ENCODE measurements at regions of chr1 and their contacts with region 1.

Region 1: DNA sequence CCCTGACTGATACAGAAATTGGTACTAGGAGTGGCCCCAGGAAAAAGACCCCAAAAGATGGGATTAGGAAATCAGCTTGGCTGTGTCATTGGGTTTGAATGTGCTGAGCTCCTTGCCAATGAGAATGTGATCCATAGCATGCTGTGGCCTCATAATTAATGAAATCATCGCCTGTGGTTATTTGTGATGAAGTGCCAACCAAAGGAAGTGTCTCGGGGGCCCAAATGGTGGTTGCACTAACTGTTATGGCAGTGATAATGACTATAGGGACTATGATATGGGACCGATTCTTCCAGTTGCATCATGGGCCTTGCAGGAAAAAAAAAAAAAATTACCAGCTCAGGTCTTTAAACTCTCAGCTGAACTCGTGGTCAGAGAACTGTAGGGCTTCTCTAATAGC is 15.4 kb upstream of the ZDHHC18 start:
- DNase-seq: no peak
- ATAC-seq: 0 out of 3 replicates have a peak, but pooled peaks have one; percentile 20
- H3K4me3 ChIP-seq: no peak overlapping the region
- H3K27ac ChIP-seq: no peak overlapping the region
- H3K4me1 ChIP-seq: no peaks in the 10 kb centered on the region
- H3K27me3 ChIP-seq: no peaks in the 10 kb centered on the region
- CTCF ChIP-seq: no peak
- EP300 ChIP-seq: no peak
- POLR2A ChIP-seq: no peak
- RAD21 ChIP-seq: no peak

Region 2: DNA sequence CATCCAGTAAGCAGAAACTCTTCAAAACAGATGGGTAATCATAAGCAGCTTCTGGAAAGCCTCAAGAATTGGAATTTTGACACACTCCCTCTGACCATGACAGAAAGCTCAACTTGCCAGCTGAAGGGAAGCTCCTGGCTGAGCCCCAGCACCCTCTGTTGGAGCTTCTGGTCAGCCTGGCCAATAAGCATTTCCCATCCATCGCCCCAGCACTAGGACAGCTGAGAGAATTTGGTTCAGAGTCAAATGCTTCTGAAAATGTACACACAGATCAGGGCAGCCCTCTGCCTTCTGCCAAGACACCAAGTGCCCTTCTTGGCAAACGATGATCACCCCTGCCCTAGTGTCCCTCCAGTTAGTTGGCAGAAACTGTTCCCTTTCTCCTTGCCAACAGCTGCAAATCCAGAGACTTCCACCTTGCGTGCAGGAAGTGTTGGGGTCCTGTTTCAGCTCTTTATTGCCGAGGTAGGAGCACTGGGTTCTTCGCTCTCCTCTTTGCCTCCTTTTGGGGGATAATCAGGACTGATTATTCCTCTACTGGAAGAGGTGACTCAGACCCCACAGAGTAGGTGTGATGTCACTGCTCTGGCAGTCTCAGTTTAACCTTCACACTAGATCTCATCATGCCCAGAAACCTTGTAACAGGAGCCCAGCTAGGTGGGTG is 11.4 kb before region 1 on chr1:
- CTCF ChIA-PET with region 1: interaction called, 36 read pairs
- POLR2A ChIA-PET with region 1: interaction called, 8 read pairs
- RAD21 ChIA-PET with region 1: interaction called, 6 read pairs
- SMC1A ChIA-PET with region 1: interaction called, 24 read pairs
- in situ Hi-C with region 1: no loop called
- intact Hi-C with region 1: no loop called
- DNase-seq: no peak
- ATAC-seq: peak; percentile 53
- H3K4me3 ChIP-seq: no peak overlapping the region
- H3K27ac ChIP-seq: peak overlapping the region; percentile 0; the same call in 1 of the 2 replicates
- H3K4me1 ChIP-seq: peaks cover 11% of the 10 kb centered on the region
- H3K27me3 ChIP-seq: no peaks in the 10 kb centered on the region
- CTCF ChIP-seq: no peak
- EP300 ChIP-seq: no peak
- POLR2A ChIP-seq: no peak
- RAD21 ChIP-seq: no peak

Region 3: GRCh38 chr1:26833432-26834405 is 22.7 kb after region 1 on chr1:
- CTCF ChIA-PET with region 1: interaction called, 117 read pairs
- POLR2A ChIA-PET with region 1: interaction called, 7 read pairs
- RAD21 ChIA-PET with region 1: interaction called, 28 read pairs
- SMC1A ChIA-PET with region 1: interaction called, 35 read pairs
- in situ Hi-C with region 1: no loop called
- intact Hi-C with region 1: loop called (anchors 2 kb)
- DNase-seq: peak; percentile 88
- ATAC-seq: peak; percentile 88
- H3K4me3 ChIP-seq: peak overlapping the region; percentile 56; the same call in 1 of the 2 replicates
- H3K27ac ChIP-seq: peak overlapping the region; percentile 99
- H3K4me1 ChIP-seq: peaks cover 40% of the 10 kb centered on the region
- H3K27me3 ChIP-seq: no peaks in the 10 kb centered on the region
- CTCF ChIP-seq: peak; percentile 40 to 54 (median 46); a peak in 5 of 6 replicates
- EP300 ChIP-seq: no peak; a peak in 1 of 4 replicates
- POLR2A ChIP-seq: peak; percentile 84
- RAD21 ChIP-seq: peak; percentile 69

Region 4: DNA sequence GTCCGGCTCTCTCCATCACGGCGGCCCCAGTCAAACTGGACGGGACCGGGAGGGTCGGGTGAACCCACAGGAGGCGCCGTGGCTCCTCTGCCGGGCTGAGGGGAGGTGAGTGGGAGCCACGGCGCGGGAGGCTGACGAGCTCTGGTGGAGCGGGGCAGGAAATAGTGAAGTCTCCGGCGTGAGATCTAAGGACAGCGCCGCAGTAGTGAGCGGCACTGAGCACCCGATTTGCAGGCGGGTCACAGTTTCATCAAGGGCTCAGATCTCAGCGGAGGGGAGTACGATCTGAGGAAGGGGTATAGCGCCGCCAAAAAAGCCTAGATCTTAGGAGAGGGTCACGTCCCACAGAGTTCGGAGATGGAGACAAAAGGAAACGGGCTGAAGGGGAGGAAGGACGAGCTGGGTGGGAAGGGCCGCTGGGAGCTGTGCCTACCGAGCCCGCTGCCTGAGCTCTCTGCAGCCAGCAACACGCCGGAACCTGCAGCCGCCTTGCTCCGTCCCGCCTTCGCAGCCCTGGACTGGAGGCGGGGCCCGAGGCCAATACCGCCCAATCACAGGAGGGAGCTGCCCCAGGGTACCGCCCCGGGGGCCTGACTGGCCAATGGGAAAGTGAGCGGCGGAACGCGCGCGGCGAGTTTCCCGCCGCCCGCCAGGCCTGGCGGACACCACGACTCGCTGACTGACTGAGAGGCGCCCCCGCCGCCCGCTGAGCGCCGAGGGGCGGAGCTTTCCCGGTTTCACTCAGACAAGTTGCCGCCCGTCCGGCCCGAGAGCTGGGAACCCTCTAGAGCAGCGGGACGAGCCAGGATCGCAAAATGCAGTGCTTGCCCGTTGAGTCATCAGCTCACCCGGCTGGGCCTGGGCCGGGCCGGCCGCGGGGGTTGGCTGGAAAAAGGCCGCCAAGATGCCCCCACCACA is 53.8 kb after region 1 on chr1:
- CTCF ChIA-PET with region 1: interaction called, 38 read pairs
- POLR2A ChIA-PET with region 1: interaction called, 18 read pairs
- RAD21 ChIA-PET with region 1: interaction called, 29 read pairs
- SMC1A ChIA-PET with region 1: interaction called, 9 read pairs
- in situ Hi-C with region 1: no loop called
- intact Hi-C with region 1: no loop called
- DNase-seq: peak; percentile 91
- ATAC-seq: peak; percentile 96
- H3K4me3 ChIP-seq: peak overlapping the region; percentile 93
- H3K27ac ChIP-seq: peak overlapping the region; percentile 99
- H3K4me1 ChIP-seq: peaks cover 16% of the 10 kb centered on the region
- H3K27me3 ChIP-seq: no peaks in the 10 kb centered on the region
- CTCF ChIP-seq: no peak
- EP300 ChIP-seq: 0 out of 4 replicates have a peak, but pooled peaks of 1 of the 2 experiments have one; percentile 18
- POLR2A ChIP-seq: peak; percentile 98
- RAD21 ChIP-seq: no peak

Region 5: DNA sequence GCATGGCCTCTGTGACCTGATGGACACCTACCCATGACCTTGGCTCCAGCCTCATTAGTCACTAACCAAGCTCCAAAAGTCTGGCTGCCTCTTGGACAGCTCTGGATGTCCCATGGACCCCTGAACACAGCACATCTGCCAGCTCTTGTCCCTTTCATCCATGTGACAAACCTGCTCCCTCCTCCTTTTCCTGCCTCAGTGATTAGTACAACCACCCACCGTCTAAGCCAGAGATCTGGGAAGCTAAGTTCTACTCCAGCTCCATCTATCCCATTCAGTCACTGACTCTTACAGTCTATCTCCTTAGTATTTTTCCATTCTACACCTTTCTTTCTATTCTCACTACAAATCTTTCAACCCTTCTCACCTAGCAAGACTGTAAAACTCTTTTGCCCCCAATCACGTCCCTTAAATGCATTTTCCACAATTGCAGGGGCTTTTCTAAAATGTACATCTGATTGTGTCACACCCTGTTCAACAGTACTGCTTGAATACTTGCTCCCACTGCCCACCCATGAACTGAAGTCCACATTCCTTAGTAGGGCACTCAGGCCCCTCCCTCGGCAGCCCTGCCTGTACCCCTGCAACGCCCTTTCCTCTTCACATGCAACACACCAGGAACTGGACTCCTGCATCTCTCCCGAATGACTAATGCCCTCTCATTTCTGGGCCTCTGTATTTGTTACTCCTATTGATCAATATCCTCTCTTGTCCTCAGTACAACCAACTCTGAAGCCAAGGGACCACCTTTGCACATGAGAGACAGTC is 71.8 kb after region 1 on chr1:
- CTCF ChIA-PET with region 1: interaction called, 36 read pairs
- POLR2A ChIA-PET with region 1: interaction called, 4 read pairs
- RAD21 ChIA-PET with region 1: interaction called, 3 read pairs
- SMC1A ChIA-PET with region 1: interaction called, 22 read pairs
- in situ Hi-C with region 1: loop called (anchors 5 kb)
- intact Hi-C with region 1: loop called (anchors 1 kb)
- DNase-seq: no peak
- ATAC-seq: no peak
- H3K4me3 ChIP-seq: no peak overlapping the region
- H3K27ac ChIP-seq: no peak overlapping the region
- H3K4me1 ChIP-seq: no peaks in the 10 kb centered on the region
- H3K27me3 ChIP-seq: no peaks in the 10 kb centered on the region
- CTCF ChIP-seq: no peak
- EP300 ChIP-seq: no peak
- POLR2A ChIP-seq: no peak
- RAD21 ChIP-seq: no peak